PC-3 (cell line): ENCODE measurements at regions of chr2 and their contacts with region 1.

Region 1: GRCh38 chr2:39881494-39881893 is 102.4 kb upstream of the THUMPD2 start:
- DNase-seq: peak; percentile 86
- ATAC-seq: peak; percentile 97
- H3K4me3 ChIP-seq: no peak overlapping the region
- H3K27ac ChIP-seq: peak overlapping the region; percentile 79
- H3K4me1 ChIP-seq: peaks cover 34% of the 10 kb centered on the region
- H3K27me3 ChIP-seq: no peaks in the 10 kb centered on the region
- CTCF ChIP-seq: no peak

Region 2: GRCh38 chr2:39845460-39846146 is 35.9 kb before region 1 on chr2:
- CTCF ChIA-PET with region 1: no interaction called
- POLR2A ChIA-PET with region 1: no interaction called
- intact Hi-C with region 1: no loop called
- DNase-seq: peak; percentile 94
- ATAC-seq: peak; percentile 99
- H3K4me3 ChIP-seq: no peak overlapping the region
- H3K27ac ChIP-seq: peak overlapping the region; percentile 47
- H3K4me1 ChIP-seq: peaks cover 22% of the 10 kb centered on the region
- H3K27me3 ChIP-seq: no peaks in the 10 kb centered on the region
- CTCF ChIP-seq: no peak

Region 3: DNA sequence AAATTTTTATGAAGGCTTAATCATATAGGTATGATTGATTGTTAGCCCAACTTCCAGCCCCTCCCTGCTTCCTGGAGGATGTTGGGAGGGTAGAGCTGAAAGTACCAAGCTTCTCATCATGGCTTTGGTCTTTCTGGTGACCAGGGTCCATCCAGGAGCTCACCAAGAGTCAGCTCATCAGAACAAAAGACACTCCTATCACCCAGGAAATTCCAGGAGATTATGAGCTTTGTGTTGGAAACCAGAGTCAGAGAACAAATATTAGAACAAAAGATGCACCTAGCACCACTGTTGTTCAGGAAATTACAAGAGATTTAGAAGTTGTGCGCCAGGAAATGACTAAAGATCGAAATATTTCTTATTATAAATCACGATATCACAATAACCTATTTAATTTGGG is 17.4 kb after region 1 on chr2:
- CTCF ChIA-PET with region 1: no interaction called
- POLR2A ChIA-PET with region 1: no interaction called
- intact Hi-C with region 1: loop called (anchors 2 kb)
- DNase-seq: peak; percentile 76
- ATAC-seq: peak; percentile 92
- H3K4me3 ChIP-seq: no peak overlapping the region
- H3K27ac ChIP-seq: peak overlapping the region; percentile 68
- H3K4me1 ChIP-seq: peaks cover 15% of the 10 kb centered on the region
- H3K27me3 ChIP-seq: no peaks in the 10 kb centered on the region
- CTCF ChIP-seq: no peak